CD4-positive, alpha-beta T cell (primary cell): ENCODE measurements at regions of chr4 and their contacts with region 1.

Region 1: DNA sequence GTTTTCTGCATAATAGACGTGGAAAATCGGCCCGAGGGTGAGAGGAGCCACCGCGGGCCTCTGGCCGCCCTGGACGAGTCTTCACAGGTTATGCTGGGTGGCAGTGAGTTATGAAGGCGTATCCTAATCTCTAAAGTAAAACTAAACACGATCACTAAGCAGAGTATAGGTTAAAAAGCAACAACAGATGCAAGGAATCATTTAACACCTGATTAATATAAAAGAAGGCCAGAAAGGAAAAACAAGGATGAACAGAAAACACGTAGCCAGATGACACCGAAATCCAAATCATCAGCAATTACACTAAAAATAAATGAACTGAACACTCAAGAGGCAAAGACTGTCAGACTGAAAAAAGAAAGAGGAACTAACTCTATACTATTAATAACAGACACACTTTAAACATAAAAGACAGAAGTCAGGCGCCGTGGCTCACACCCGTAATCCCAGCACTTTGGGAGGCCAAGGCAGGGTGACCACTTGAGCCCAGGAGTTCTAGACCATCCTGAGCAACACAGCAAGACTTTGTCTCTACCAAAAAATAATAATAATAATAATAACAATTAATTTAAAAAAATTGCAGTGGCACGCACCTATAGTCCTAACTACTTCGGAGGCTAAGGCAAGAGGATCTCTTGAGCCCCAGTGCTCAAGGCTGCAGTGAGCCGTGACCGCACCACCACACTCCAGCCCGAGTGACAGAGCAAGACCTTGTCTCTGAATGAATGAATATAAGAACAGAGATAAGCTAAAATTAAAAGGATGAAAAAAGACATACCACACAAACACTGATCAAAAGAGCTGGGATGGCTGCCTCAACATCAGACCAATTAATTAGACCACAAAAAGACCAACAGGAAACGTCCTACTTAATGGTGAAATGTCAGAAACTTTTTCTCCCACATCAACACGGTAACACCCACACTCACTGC is 30.0 kb downstream of the CTBP1 start:
- DNase-seq: no peak
- ATAC-seq: no peak
- H3K4me3 ChIP-seq: no peak overlapping the region
- H3K4me3 Mint-ChIP-seq: peak overlapping the region; percentile 42
- H3K27ac ChIP-seq: no peak overlapping the region
- H3K27ac Mint-ChIP-seq: peak overlapping the region; percentile 66
- H3K4me1 ChIP-seq: peaks cover 44% of the 10 kb centered on the region
- H3K4me1 Mint-ChIP-seq: peaks cover 32% of the 10 kb centered on the region
- H3K27me3 ChIP-seq: no peaks in the 10 kb centered on the region
- H3K27me3 Mint-ChIP-seq: no peaks in the 10 kb centered on the region
- CTCF ChIP-seq: no peak

Region 2: GRCh38 chr4:1055721-1056590 is 162.9 kb before region 1 on chr4:
- CTCF ChIA-PET with region 1: no interaction called
- POLR2A ChIA-PET with region 1: no interaction called
- intact Hi-C with region 1: no loop called
- DNase-seq: peak; percentile 70 to 95 (median 83)
- ATAC-seq: peak; percentile 97
- H3K4me3 ChIP-seq: peak overlapping the region; percentile 60
- H3K4me3 Mint-ChIP-seq: peak overlapping the region; percentile 44
- H3K27ac ChIP-seq: peak overlapping the region; percentile 8 to 66
- H3K27ac Mint-ChIP-seq: peak overlapping the region; percentile 83
- H3K4me1 ChIP-seq: peaks cover 19% of the 10 kb centered on the region
- H3K4me1 Mint-ChIP-seq: peaks cover 11% of the 10 kb centered on the region
- H3K27me3 ChIP-seq: peaks cover 0 to 4% of the 10 kb centered on the region in 2 experiments
- H3K27me3 Mint-ChIP-seq: no peaks in the 10 kb centered on the region
- CTCF ChIP-seq: no peak

Region 3: DNA sequence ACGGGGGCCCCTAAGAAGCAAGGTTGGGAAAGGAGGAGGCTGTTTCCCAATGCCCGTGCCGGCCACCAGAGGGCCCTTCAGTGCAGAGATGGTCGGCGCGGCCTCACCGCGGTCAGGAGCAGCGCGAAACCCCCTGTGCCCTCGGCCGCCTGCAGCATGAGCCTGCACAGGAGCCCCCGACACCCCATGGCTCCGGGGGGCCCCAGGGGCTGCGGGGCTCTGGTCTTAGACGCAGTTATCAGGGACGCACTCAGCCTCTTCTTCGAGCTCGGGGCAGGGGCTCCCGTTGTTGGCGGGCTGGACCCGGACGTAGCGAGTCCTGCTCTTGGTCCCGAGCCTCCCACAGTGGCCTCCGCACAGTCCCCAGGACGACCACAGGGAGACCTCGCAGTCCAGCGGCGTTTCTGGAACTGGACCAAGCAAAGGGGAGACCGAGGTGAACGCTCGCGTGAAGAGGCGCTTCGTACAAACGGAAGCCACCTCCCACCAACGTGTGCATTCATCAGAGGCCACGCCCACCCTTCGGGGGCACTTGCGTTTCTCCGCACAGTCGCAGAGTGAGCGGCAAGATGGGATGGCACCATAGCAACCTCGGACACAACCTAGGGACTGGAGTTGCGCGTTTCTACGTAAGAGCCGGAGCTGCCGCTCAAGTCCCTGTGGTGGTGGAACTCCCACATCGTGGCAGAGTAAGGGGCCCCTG is 51.5 kb before region 1 on chr4:
- CTCF ChIA-PET with region 1: interaction called, 6 read pairs
- POLR2A ChIA-PET with region 1: interaction called, 7 read pairs
- intact Hi-C with region 1: loop called (anchors 1 to 5 kb)
- DNase-seq: peak; percentile 69 to 96 (median 84)
- ATAC-seq: peak; percentile 87
- H3K4me3 ChIP-seq: peak overlapping the region; percentile 79
- H3K4me3 Mint-ChIP-seq: peak overlapping the region; percentile 90
- H3K27ac ChIP-seq: no peak overlapping the region
- H3K27ac Mint-ChIP-seq: peak overlapping the region; percentile 67
- H3K4me1 ChIP-seq: peaks cover 40% of the 10 kb centered on the region
- H3K4me1 Mint-ChIP-seq: peaks cover 25% of the 10 kb centered on the region
- H3K27me3 ChIP-seq: peaks cover 19 to 21% of the 10 kb centered on the region in 2 experiments
- H3K27me3 Mint-ChIP-seq: peaks cover 16% of the 10 kb centered on the region
- CTCF ChIP-seq: peak; percentile 97

Region 4: DNA sequence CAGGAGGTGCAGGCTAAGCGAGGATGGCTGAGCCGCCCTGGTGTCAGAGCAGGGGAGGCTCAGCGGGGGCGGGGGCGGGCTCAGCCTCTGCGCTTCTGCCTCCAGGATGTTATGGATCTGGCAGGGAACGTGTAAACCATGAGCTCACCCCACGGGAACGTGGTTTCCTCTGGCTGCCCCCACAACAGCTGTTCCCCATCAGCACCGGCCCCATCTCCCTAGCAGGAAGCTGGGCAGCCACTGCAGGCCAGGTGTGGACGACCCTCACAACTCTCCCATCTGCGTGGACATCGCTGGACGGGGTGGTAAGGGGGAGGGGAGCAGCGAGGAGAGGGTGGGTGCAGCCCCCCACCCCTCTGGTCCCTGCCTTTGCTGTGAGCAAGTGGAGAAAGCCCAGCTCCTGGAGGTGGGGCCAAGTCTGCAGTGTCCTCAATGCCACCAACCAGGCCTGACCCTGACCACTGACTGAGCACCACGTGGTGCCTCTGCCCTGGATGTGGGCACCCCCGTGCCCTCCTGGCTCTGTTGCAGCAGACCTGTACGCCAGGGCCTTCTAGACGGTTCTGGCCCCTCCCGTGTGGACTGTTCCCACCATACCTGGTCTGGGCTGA is 18.4 kb before region 1 on chr4:
- CTCF ChIA-PET with region 1: no interaction called
- POLR2A ChIA-PET with region 1: interaction called, 15 read pairs
- intact Hi-C with region 1: no loop called
- DNase-seq: peak in 4 of 14 experiments; percentile 32 to 58 (median 37)
- ATAC-seq: no peak
- H3K4me3 ChIP-seq: peak overlapping the region; percentile 66
- H3K4me3 Mint-ChIP-seq: peak overlapping the region; percentile 83
- H3K27ac ChIP-seq: peak overlapping the region; percentile 71 to 80
- H3K27ac Mint-ChIP-seq: peak overlapping the region; percentile 97
- H3K4me1 ChIP-seq: peaks cover 65% of the 10 kb centered on the region
- H3K4me1 Mint-ChIP-seq: peaks cover 30% of the 10 kb centered on the region
- H3K27me3 ChIP-seq: no peaks in the 10 kb centered on the region
- H3K27me3 Mint-ChIP-seq: no peaks in the 10 kb centered on the region
- CTCF ChIP-seq: no peak